GM12878 (cell line): ENCODE measurements at regions of chr15 and their contacts with region 1.

Region 1: GRCh38 chr15:64093627-64094417 is at the start of gene CIAO2A:
- DNase-seq: peak; percentile 99
- ATAC-seq: peak; percentile 74
- H3K4me3 ChIP-seq: peak within 1 kb of the TSS; percentile 96
- H3K27ac ChIP-seq: peak within 1 kb of the TSS; percentile 94
- H3K4me1 ChIP-seq: peaks cover 32% of the 10 kb centered on the region
- H3K27me3 ChIP-seq: no peaks in the 10 kb centered on the region
- CTCF ChIP-seq: no peak
- EP300 ChIP-seq: no peak
- POLR2A ChIP-seq: peak; percentile 66; the same call in 1 of the 2 replicates
- RAD21 ChIP-seq: no peak
- polyA plus RNA-seq, gene CIAO2A: 264 to 303 TPM

Region 2: DNA sequence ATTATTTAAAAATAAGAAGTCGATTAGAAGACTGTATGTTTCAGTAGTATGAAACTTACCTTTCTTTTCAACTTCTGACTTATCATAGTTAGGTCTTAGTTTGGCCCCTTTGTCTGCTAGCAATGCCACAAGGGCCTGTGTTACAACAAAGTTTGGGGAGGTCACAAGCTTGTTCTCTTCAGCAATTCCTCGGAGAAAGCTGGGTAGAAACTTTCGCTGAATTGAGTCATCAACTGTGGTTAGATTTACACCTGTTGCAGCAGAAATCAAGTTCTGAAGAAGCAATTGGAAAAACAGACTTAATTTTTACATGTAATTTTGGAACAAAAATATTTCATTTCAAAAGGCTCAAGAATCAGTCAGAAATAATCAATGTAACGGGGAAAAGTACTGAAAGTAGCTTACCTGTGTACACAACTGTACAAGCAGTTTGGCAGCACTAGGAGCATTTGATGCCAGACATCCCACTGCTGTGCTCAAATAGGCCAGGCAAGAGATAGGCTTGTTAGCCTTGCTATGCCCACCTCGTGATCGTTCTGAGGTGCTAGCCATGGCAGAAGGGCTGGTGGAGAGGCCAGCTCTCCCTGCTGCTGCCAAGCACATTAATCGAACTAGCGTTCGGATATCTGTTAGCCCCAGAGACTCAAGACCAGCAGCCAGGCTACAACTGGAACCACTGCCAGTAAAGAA is 438.0 kb before region 1 on chr15:
- CTCF ChIA-PET with region 1: no interaction called
- POLR2A ChIA-PET with region 1: no interaction called
- RAD21 ChIA-PET with region 1: no interaction called
- SMC1A ChIA-PET with region 1: no interaction called
- in situ Hi-C with region 1: no loop called
- intact Hi-C with region 1: no loop called
- DNase-seq: no peak
- ATAC-seq: no peak
- H3K4me3 ChIP-seq: no peak overlapping the region
- H3K27ac ChIP-seq: no peak overlapping the region; the same call in 1 of the 2 replicates
- H3K4me1 ChIP-seq: no peaks in the 10 kb centered on the region
- H3K27me3 ChIP-seq: no peaks in the 10 kb centered on the region
- CTCF ChIP-seq: no peak
- EP300 ChIP-seq: no peak
- POLR2A ChIP-seq: no peak
- RAD21 ChIP-seq: no peak

Region 3: DNA sequence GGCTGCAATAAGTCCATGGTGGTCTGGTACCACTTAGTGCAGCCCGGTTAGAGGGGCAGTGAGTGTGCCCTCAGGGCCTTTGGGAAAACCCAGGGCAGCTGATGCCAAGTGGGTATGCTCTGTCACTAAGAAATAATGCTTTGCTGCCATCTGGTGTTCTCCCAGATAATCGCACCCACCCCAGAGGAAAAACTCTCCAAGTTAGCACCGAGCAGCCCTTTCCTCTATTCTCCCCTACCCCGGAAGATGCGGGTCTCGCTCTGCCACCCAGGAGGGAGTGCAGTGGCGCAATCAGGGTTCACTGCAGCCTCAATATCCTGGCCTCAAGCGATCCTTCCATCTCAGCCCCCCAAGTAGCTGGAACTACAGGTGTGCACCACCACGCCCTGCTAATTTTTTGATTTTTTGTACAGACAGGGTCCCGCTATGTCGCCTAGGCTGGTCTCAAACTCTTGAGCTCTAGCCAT is 26.2 kb before region 1 on chr15:
- CTCF ChIA-PET with region 1: interaction called, 73 read pairs
- POLR2A ChIA-PET with region 1: interaction called, 3 read pairs
- RAD21 ChIA-PET with region 1: interaction called, 16 read pairs
- SMC1A ChIA-PET with region 1: interaction called, 12 read pairs
- in situ Hi-C with region 1: no loop called
- intact Hi-C with region 1: no loop called
- DNase-seq: peak; percentile 40
- ATAC-seq: peak; percentile 94
- H3K4me3 ChIP-seq: no peak overlapping the region
- H3K27ac ChIP-seq: no peak overlapping the region
- H3K4me1 ChIP-seq: peaks cover 13% of the 10 kb centered on the region
- H3K27me3 ChIP-seq: no peaks in the 10 kb centered on the region
- CTCF ChIP-seq: peak; percentile 72 to 83 (median 77)
- EP300 ChIP-seq: no peak
- POLR2A ChIP-seq: no peak
- RAD21 ChIP-seq: peak; percentile 89

Region 4: DNA sequence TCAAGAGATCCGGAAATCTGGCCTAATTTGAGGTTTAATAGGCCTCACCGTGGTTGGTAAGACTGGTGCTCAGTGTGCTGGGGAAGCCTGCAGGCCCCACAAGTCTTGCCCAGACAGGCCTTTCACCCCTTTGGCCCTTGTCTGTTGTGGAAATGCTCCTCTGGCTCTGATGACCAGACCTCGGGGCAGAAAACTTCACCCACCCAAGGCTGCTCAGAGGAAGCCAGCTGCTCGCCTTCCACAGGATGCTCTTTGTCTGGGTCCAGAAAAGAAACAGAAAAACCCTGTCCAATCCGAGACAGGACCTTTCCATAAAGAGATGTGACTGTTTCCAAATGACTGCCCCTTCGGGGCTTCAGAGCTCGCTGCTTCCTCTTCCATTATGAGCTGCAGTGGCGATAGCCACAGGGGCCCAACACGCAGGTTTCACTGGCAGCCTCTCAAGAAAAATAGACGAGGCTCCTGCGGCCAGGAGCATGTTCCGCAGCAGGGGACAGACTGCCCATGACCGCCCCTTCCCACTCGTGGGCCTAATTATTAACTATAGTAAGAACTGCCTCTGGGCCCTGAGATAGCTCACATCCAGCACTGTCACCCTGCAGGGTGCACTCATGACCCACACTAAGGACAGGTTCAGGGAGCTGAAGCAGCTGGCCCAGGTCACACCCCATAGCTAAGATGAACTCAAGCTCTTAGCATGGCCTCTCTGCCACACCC is 50.9 kb after region 1 on chr15:
- CTCF ChIA-PET with region 1: interaction called, 6 read pairs
- POLR2A ChIA-PET with region 1: interaction called, 17 read pairs
- RAD21 ChIA-PET with region 1: interaction called, 15 read pairs
- SMC1A ChIA-PET with region 1: interaction called, 9 read pairs
- in situ Hi-C with region 1: no loop called
- intact Hi-C with region 1: no loop called
- DNase-seq: peak; percentile 79
- ATAC-seq: peak; percentile 91
- H3K4me3 ChIP-seq: peak overlapping the region; percentile 21; the same call in 1 of the 2 replicates
- H3K27ac ChIP-seq: peak overlapping the region; percentile 92
- H3K4me1 ChIP-seq: peaks cover 42% of the 10 kb centered on the region
- H3K27me3 ChIP-seq: no peaks in the 10 kb centered on the region
- CTCF ChIP-seq: no peak
- EP300 ChIP-seq: peak in 1 of 2 experiments; percentile 49; a peak in 2 of 4 replicates
- POLR2A ChIP-seq: peak; percentile 72
- RAD21 ChIP-seq: no peak

Region 5: GRCh38 chr15:64162870-64163658 is 69.2 kb after region 1 on chr15 and contains the start of gene PPIB:
- CTCF ChIA-PET with region 1: interaction called, 7 read pairs
- POLR2A ChIA-PET with region 1: interaction called, 21 read pairs
- RAD21 ChIA-PET with region 1: interaction called, 12 read pairs
- SMC1A ChIA-PET with region 1: interaction called, 4 read pairs
- in situ Hi-C with region 1: no loop called
- intact Hi-C with region 1: no loop called
- DNase-seq: peak; percentile 91
- ATAC-seq: peak; percentile 95
- H3K4me3 ChIP-seq: peak within 1 kb of the TSS; percentile 84
- H3K27ac ChIP-seq: peak within 1 kb of the TSS; percentile 81
- H3K4me1 ChIP-seq: peaks cover 30% of the 10 kb centered on the region
- H3K27me3 ChIP-seq: no peaks in the 10 kb centered on the region
- CTCF ChIP-seq: peak; percentile 47 to 73 (median 54)
- EP300 ChIP-seq: no peak
- POLR2A ChIP-seq: peak; percentile 99
- RAD21 ChIP-seq: peak; percentile 67
- polyA plus RNA-seq, gene PPIB: 831 to 858 TPM

Region 6: DNA sequence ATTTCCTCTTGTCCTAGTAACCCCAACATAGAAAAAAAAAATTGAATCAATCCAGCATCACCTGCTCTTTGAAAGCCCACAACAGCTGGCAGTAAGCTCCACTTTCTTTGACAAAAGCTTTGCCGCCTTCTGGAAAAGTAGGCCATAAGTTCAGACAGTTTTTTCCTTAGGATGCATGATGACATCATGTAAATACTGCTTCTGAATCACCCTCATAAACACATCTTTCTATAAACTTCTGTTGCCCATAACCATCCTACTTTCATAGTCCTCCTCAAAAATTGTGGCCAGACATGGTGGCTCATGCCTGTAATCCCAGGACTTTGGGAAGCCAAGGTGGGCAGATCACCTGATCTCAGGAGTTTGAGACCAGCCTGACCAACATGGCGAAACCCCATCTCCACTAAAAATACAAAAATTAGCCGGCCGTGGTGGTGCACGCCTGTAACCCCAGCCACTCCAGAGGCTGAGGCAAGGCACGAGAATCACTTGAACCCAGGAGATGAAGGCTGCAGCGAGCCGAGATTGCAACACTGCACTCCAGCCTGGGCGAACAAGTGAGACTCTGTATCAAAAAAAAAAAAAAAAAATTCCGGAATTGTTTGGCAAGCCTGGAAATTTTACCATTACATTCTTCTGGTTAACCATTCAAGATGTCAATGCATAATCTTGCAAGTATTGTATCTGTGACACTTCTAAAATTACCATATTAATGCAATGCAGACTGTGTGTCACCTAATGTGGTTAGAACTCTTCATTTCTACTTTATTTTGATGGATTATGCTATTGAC is 195.0 kb after region 1 on chr15:
- CTCF ChIA-PET with region 1: no interaction called
- POLR2A ChIA-PET with region 1: no interaction called
- RAD21 ChIA-PET with region 1: no interaction called
- SMC1A ChIA-PET with region 1: no interaction called
- in situ Hi-C with region 1: no loop called
- intact Hi-C with region 1: no loop called
- DNase-seq: no peak
- ATAC-seq: no peak
- H3K4me3 ChIP-seq: no peak overlapping the region
- H3K27ac ChIP-seq: no peak overlapping the region
- H3K4me1 ChIP-seq: no peaks in the 10 kb centered on the region
- H3K27me3 ChIP-seq: no peaks in the 10 kb centered on the region
- CTCF ChIP-seq: no peak
- EP300 ChIP-seq: no peak
- POLR2A ChIP-seq: no peak
- RAD21 ChIP-seq: no peak